Caco-2 (cell line): ENCODE measurements at regions of chr13 and their contacts with region 1.

Region 1: GRCh38 chr13:33542283-33543088 is 256.9 kb upstream of the STARD13 start:
- DNase-seq: peak; percentile 98 to 99
- H3K4me3 ChIP-seq: peak overlapping the region; percentile 55
- H3K4me3 Mint-ChIP-seq: peak overlapping the region; percentile 92
- H3K27ac Mint-ChIP-seq: peak overlapping the region; percentile 98
- H3K4me1 ChIP-seq: peaks cover 17% of the 10 kb centered on the region
- H3K4me1 Mint-ChIP-seq: peaks cover 19% of the 10 kb centered on the region
- H3K27me3 ChIP-seq: no peaks in the 10 kb centered on the region
- H3K27me3 Mint-ChIP-seq: no peaks in the 10 kb centered on the region
- CTCF ChIP-seq: peak; percentile 78 to 89

Region 2: GRCh38 chr13:32669030-32669646 is 873.3 kb before region 1 on chr13:
- CTCF ChIA-PET with region 1: no interaction called
- POLR2A ChIA-PET with region 1: no interaction called
- intact Hi-C with region 1: loop called (anchors 2 kb)
- DNase-seq: peak in 1 of 2 experiments; percentile 52
- H3K4me3 ChIP-seq: no peak overlapping the region
- H3K4me3 Mint-ChIP-seq: no peak overlapping the region
- H3K27ac Mint-ChIP-seq: no peak overlapping the region
- H3K4me1 ChIP-seq: no peaks in the 10 kb centered on the region
- H3K4me1 Mint-ChIP-seq: peaks cover 6% of the 10 kb centered on the region
- H3K27me3 ChIP-seq: no peaks in the 10 kb centered on the region
- H3K27me3 Mint-ChIP-seq: no peaks in the 10 kb centered on the region
- CTCF ChIP-seq: peak; percentile 77 to 80

Region 3: DNA sequence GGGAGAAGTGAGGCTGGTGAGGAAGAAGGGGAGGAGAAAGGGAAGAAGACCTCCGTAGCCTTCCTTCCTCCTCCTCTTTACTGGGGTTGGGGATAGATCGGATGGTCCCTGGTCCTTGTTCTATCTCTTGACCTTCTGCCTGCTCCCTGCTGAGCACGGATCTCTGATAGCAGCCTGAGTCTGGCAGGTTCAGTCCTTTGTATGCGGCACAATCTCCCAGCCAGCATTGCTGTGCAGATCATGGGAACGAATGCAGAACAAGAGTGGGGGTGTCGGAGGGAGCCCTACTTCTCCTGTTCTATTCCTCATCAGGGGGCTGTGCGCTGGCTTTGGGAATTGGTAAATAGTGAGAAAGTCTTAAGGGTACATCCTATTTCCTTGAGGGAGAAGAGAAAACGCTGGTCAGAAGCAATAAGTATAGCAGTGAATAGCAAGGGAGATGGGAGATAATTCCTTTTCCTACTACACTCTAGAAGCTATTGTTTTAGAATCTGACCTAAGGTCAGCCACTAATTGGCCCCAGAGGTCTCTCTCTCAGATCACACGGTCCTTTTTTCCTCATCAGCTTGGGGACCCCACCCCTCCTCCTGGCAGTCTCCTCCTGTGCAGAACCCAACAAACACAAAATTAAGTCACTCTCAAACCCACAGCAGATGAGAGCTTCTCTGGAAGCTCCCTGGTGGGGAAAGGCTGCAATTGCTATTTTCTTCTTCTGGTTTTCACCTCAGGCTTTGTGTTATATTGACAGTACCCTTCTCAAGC is 485.3 kb before region 1 on chr13:
- CTCF ChIA-PET with region 1: no interaction called
- POLR2A ChIA-PET with region 1: no interaction called
- intact Hi-C with region 1: loop called (anchors 10 kb)
- DNase-seq: peak in 1 of 2 experiments; percentile 41
- H3K4me3 ChIP-seq: no peak overlapping the region
- H3K4me3 Mint-ChIP-seq: no peak overlapping the region
- H3K27ac Mint-ChIP-seq: no peak overlapping the region
- H3K4me1 ChIP-seq: peaks cover 14% of the 10 kb centered on the region
- H3K4me1 Mint-ChIP-seq: peaks cover 27% of the 10 kb centered on the region
- H3K27me3 ChIP-seq: no peaks in the 10 kb centered on the region
- H3K27me3 Mint-ChIP-seq: no peaks in the 10 kb centered on the region
- CTCF ChIP-seq: peak; percentile 40 to 55

Region 4: DNA sequence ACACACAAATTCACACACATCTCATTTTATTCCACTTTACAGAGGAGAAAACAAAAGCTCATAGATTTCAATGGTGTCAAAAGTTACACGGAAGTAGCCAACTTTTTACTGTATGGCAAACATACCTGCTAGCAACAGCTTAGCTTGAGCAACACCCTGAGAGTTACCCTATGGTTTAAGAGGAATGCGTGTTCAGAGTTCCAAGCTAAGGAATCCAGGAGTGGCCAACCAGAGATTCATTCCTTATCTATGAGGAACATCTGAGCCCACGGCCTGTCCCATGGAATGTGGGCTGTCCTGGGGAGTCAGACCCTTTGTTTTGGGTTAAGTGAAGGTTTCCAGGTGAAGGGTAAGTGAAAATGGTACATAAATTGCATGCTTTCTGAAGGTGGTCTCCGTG is 324.5 kb before region 1 on chr13:
- CTCF ChIA-PET with region 1: interaction called, 5 read pairs
- POLR2A ChIA-PET with region 1: interaction called, 8 read pairs
- intact Hi-C with region 1: loop called (anchors 2 kb)
- DNase-seq: peak; percentile 88 to 93
- H3K4me3 ChIP-seq: peak overlapping the region; percentile 11; the same call in 1 of the 2 replicates
- H3K4me3 Mint-ChIP-seq: peak overlapping the region; percentile 59
- H3K27ac Mint-ChIP-seq: peak overlapping the region; percentile 91
- H3K4me1 ChIP-seq: peaks cover 57% of the 10 kb centered on the region
- H3K4me1 Mint-ChIP-seq: peaks cover 53% of the 10 kb centered on the region
- H3K27me3 ChIP-seq: no peaks in the 10 kb centered on the region
- H3K27me3 Mint-ChIP-seq: no peaks in the 10 kb centered on the region
- CTCF ChIP-seq: no peak

Region 5: GRCh38 chr13:33285420-33286124 is 256.9 kb before region 1 on chr13 and contains the start of gene STARD13:
- CTCF ChIA-PET with region 1: interaction called, 5 read pairs
- POLR2A ChIA-PET with region 1: interaction called, 8 read pairs
- intact Hi-C with region 1: loop called (anchors 2 kb)
- DNase-seq: peak; percentile 94 to 96
- H3K4me3 ChIP-seq: peak within 1 kb of the TSS; percentile 49
- H3K4me3 Mint-ChIP-seq: peak within 1 kb of the TSS; percentile 86
- H3K27ac Mint-ChIP-seq: peak within 1 kb of the TSS; percentile 96
- H3K4me1 ChIP-seq: peaks cover 7% of the 10 kb centered on the region; the same call in 1 of the 2 replicates
- H3K4me1 Mint-ChIP-seq: peaks cover 11% of the 10 kb centered on the region
- H3K27me3 ChIP-seq: no peaks in the 10 kb centered on the region
- H3K27me3 Mint-ChIP-seq: no peaks in the 10 kb centered on the region
- CTCF ChIP-seq: peak; percentile 15 to 44
- total RNA-seq, gene STARD13: 9.1 and 12.9 TPM in 2 replicates

Region 6: DNA sequence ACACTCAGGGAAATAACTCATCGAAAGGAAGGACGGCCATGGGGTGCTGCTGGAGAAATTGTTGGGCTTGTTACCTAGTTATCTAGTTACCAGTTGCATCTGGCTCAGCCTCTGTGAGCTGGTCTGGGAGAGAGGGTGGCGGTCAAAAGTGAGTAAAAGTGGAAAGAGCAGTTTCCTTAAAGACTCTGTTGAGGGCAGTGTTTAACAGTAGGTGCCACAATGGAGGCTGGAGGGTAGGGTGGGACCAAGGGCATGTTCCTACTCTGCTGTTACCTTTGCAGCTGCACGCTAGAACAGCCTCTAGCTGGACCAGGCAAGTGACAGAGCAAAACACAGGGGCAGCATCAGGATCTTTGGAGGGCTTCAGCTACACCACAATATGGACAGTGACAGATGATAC is 28.1 kb before region 1 on chr13:
- CTCF ChIA-PET with region 1: interaction called, 6 read pairs
- POLR2A ChIA-PET with region 1: no interaction called
- intact Hi-C with region 1: loop called (anchors 2 kb)
- DNase-seq: no peak
- H3K4me3 ChIP-seq: no peak overlapping the region
- H3K4me3 Mint-ChIP-seq: no peak overlapping the region
- H3K27ac Mint-ChIP-seq: no peak overlapping the region
- H3K4me1 ChIP-seq: no peaks in the 10 kb centered on the region
- H3K4me1 Mint-ChIP-seq: no peaks in the 10 kb centered on the region
- H3K27me3 ChIP-seq: no peaks in the 10 kb centered on the region
- H3K27me3 Mint-ChIP-seq: no peaks in the 10 kb centered on the region
- CTCF ChIP-seq: no peak

Region 7: DNA sequence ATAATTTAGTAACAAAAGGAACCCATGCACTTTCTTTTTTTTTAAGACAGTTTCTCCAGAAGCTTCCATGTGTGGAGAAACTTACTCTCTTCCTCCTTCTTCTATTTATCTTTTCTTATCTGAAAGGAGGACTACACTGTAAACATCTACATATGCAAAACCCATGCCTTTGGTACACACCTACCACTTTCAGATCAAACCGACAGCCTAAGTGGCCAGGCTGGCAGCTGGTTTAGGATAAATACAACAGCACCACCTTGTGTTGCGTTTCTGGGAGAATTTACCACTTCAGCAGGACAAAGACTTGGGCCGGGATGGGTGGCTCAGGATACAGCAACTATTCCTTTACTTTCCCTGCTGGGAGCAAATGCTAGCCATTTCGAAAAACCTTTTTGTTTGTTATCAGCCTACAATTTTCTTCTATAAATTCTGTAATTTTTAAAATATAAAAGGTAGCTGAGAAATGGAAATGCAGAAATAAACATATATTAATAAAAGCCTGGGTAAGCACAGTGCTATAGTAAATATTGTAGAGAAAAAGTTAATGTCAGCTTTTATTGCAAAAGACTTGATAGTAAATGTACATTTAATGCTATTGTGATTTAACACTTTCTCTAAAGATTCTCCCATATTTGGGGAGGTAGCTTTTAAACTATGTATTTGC is 181.4 kb after region 1 on chr13:
- CTCF ChIA-PET with region 1: interaction called, 11 read pairs
- POLR2A ChIA-PET with region 1: no interaction called
- intact Hi-C with region 1: loop called (anchors 1 kb)
- DNase-seq: peak; percentile 83 to 85
- H3K4me3 ChIP-seq: no peak overlapping the region
- H3K4me3 Mint-ChIP-seq: no peak overlapping the region
- H3K27ac Mint-ChIP-seq: peak overlapping the region; percentile 59
- H3K4me1 ChIP-seq: peaks cover 10% of the 10 kb centered on the region
- H3K4me1 Mint-ChIP-seq: peaks cover 8% of the 10 kb centered on the region
- H3K27me3 ChIP-seq: no peaks in the 10 kb centered on the region
- H3K27me3 Mint-ChIP-seq: no peaks in the 10 kb centered on the region
- CTCF ChIP-seq: peak; percentile 75 to 79